AG04450 (cell line): ENCODE measurements at regions of chr1 and their contacts with region 1.

Region 1: DNA sequence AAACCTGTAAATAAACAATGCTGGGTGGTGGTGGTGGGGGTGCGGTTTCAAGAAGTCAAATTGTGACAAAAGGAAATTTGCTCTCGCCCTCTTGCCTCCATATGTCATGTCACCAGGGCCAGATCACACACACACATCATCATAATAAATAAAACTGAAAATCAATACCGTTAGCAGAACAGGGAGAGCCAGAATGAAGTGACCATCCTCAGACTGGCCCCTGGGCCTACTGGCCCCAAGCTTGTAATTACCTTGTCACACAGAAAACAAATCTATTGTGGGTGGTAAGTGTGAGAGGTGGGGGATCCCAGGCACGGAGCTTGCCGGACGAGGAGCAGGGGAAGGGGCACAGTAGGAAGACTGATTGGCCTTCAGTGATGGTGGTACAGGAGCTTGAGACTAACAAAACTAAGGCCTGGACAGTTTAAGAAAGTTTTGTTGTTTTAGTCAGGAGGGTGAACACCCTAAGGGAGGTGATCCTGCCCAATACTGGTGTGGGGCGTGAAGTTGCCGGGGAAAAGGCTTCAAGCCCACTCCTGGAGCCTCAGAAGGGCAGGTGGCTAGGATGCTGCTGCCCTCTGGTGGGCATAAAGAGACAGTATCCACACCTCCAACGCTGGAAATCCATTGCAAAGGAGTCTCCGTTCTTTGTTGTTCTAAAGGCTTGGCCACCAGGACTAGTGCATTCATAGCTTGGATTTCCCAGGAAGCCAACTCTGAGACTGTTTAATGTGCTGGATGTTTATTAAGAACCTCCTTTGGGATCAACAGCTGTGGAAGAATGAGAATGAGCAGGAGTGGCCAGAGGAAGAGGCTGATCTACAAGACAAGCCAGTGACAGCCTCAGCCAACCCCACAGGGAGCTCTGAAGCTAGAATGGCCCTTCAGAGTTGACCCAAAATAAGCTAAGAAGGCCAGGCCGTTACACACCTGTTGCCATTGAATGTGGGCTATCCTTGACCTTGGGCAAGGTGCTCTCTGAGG is 8.1 kb upstream of the C1orf216 start:
- DNase-seq: peak; percentile 45
- H3K4me3 ChIP-seq: no peak overlapping the region
- H3K27ac ChIP-seq: no peak overlapping the region
- H3K27me3 ChIP-seq: no peaks in the 10 kb centered on the region
- CTCF ChIP-seq: peak; percentile 93

Region 2: DNA sequence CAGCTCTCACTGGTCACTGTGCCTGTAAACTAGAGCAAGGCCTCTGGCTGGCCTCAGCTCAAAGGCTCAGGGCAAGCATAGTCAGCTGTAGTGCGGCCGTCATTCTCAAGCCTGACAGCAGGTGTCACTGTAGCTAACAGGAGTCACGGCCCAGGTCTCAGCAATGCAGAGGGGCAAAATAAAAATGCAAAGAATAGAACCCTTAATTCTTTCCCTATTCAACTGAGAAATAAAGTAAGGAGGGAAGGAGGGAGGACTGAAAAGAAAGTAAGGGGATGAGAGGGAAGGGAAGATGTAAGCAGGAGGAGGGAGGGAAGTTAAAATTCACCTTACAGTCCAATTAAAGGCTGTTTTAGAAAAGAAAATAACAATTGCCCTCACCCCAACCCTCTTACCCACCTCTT is 275.6 kb before region 1 on chr1:
- CTCF ChIA-PET with region 1: interaction called, 74 read pairs
- POLR2A ChIA-PET with region 1: no interaction called
- DNase-seq: peak; percentile 51
- H3K4me3 ChIP-seq: no peak overlapping the region
- H3K27ac ChIP-seq: peak overlapping the region; percentile 87
- H3K27me3 ChIP-seq: no peaks in the 10 kb centered on the region
- CTCF ChIP-seq: peak; percentile 89

Region 3: DNA sequence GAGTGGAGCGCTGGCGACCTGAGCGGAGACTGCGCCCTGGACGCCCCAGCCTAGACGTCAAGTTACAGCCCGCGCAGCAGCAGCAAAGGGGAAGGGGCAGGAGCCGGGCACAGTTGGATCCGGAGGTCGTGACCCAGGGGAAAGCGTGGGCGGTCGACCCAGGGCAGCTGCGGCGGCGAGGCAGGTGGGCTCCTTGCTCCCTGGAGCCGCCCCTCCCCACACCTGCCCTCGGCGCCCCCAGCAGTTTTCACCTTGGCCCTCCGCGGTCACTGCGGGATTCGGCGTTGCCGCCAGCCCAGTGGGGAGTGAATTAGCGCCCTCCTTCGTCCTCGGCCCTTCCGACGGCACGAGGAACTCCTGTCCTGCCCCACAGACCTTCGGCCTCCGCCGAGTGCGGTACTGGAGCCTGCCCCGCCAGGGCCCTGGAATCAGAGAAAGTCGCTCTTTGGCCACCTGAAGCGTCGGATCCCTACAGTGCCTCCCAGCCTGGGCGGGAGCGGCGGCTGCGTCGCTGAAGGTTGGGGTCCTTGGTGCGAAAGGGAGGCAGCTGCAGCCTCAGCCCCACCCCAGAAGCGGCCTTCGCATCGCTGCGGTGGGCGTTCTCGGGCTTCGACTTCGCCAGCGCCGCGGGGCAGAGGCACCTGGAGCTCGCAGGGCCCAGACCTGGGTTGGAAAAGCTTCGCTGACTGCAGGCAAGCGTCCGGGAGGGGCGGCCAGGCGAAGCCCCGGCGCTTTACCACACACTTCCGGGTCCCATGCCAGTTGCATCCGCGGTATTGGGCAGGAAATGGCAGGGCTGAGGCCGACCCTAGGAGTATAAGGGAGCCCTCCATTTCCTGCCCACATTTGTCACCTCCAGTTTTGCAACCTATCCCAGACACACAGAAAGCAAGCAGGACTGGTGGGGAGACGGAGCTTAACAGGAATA is 149.4 kb before region 1 on chr1:
- CTCF ChIA-PET with region 1: interaction called, 109 read pairs
- POLR2A ChIA-PET with region 1: no interaction called
- DNase-seq: no peak
- H3K4me3 ChIP-seq: no peak overlapping the region
- H3K27ac ChIP-seq: no peak overlapping the region
- H3K27me3 ChIP-seq: peaks cover 49% of the 10 kb centered on the region
- CTCF ChIP-seq: no peak

Region 4: DNA sequence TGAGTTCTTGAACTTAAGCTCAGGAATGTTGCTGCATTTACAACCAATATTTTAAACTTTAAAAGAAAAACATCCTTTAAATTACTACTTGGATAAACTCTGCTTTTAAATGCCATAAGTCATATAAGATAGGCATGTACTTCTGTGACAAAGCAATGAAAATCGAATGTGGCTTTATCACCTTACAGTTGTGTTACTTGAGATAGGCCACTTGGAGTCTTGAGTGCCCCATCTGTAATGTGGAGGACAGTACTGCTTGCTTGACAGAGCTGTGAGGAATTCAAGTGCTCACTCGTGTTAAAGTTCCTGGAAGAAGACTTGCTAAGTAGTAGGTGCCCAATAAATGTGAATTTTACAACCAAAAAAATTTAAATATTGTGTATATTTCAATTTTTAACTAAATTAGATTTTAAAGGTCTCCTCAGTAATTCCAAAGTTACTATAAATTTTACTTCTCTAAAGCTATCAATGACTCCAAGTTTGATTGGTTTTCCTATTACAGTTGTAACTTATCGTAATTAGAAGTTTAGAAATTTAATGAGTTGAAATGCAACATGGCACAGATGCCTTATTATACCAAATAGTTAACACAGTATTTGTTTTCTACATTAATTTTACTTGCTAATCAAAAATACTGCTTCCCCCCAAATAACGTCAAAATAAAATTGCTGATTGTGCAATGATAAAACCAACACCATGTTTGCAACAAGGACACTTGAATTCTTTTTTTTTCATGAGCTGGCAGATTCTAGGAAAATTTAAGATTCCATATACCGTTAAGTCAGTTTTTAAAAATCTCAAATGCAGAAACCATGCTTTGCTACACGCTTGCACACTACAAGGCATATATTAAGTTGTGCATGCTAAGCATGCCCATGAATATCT is 107.3 kb before region 1 on chr1:
- CTCF ChIA-PET with region 1: interaction called, 11 read pairs
- POLR2A ChIA-PET with region 1: no interaction called
- DNase-seq: no peak
- H3K4me3 ChIP-seq: no peak overlapping the region
- H3K27ac ChIP-seq: no peak overlapping the region
- H3K27me3 ChIP-seq: no peaks in the 10 kb centered on the region
- CTCF ChIP-seq: no peak

Region 5: DNA sequence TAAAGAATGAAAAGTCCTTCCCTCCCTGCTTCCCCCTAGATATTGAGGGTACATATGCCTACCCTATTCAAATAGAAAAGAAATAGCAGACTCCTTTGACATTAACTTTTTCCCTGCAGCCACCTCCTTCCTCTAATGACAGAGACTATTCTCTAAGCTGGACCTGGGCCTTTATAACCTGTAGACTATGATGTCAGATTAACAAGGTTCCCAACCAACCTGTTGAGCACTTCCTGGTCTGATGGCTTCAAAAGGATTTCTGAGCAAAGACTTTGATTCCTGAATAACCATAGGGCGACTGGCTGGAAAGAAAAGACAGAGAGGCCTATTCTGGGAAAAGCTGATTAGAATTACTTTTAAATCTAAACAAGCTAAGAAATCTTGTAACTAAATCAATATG is 10.4 kb after region 1 on chr1:
- CTCF ChIA-PET with region 1: interaction called, 67 read pairs
- POLR2A ChIA-PET with region 1: interaction called, 3 read pairs
- DNase-seq: no peak
- H3K4me3 ChIP-seq: no peak overlapping the region
- H3K27ac ChIP-seq: no peak overlapping the region
- H3K27me3 ChIP-seq: no peaks in the 10 kb centered on the region
- CTCF ChIP-seq: no peak

Region 6: GRCh38 chr1:35753626-35754260 is 27.0 kb after region 1 on chr1:
- CTCF ChIA-PET with region 1: interaction called, 17 read pairs
- POLR2A ChIA-PET with region 1: no interaction called
- DNase-seq: no peak
- H3K4me3 ChIP-seq: no peak overlapping the region
- H3K27ac ChIP-seq: no peak overlapping the region
- H3K27me3 ChIP-seq: no peaks in the 10 kb centered on the region
- CTCF ChIP-seq: no peak

Region 7: DNA sequence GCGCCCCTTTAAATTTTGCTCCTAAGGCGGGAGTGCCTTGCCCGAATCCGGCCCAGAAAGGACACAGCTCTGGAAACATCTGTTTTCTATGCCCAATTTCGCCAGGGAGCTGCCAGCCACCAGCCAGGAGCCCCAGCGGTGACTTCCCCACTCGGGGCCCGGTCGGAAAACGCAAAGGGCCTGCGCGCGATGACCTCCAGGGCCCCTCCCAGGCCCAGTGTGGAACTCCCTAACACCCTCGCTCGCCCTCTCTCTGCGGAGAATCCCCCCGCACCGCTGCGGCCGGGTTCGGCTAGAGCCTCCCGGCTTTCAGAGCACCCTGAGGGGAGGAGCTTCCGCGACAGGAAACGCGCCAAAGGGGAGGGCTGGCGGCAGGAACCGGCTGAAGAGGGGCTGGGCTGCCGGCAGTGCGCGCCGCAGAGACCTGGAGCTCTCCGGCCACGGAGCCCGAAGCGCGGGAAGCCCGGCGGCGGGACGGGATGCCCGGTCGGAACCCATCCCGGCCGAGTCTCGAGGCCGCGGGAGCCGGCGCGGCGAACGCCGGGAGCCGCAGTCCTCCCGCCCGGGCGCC is 42.5 kb after region 1 on chr1:
- CTCF ChIA-PET with region 1: interaction called, 32 read pairs
- POLR2A ChIA-PET with region 1: interaction called, 5 read pairs
- DNase-seq: peak; percentile 55
- H3K4me3 ChIP-seq: peak overlapping the region; percentile 78
- H3K27ac ChIP-seq: peak overlapping the region; percentile 70
- H3K27me3 ChIP-seq: no peaks in the 10 kb centered on the region
- CTCF ChIP-seq: peak; percentile 36